ENCODE measurements at regions of chr6 and their contacts with region 1.

Region 1: GRCh38 chr6:135994857-135995544 is 143.5 kb downstream of the PDE7B start:
- DNase-seq: no peak
- H3K4me3 ChIP-seq: no peak overlapping the region
- CTCF ChIP-seq: no peak

Region 2: GRCh38 chr6:135438907-135439535 is 556.0 kb before region 1 on chr6:
- in situ Hi-C with region 1: no loop called
- DNase-seq: no peak
- H3K4me3 ChIP-seq: no peak overlapping the region
- CTCF ChIP-seq: peak; percentile 42

Region 3: GRCh38 chr6:135938576-135939207 is 56.3 kb before region 1 on chr6:
- in situ Hi-C with region 1: loop called (anchors 5 kb)
- DNase-seq: peak; percentile 23
- H3K4me3 ChIP-seq: no peak overlapping the region
- CTCF ChIP-seq: peak; percentile 33

Region 4: DNA sequence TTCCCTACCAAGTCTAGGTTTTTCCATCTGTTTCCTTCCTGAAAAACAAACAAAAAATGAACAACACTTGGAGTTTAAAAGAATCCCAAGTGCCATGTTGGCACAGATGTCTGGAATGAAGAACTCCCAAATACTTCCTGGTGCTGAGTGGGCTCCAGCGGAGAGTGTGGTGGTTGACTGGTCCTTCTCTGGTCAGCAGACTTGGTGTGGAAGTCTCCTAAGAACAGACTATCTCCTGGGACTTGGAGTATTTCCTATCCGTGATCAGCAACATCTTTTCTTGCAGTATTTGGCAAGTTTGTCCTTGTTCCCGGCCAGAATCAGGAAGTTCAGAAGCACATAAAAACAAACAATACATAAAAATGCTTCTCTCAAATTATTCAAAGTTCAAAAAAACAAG is 101.0 kb after region 1 on chr6:
- in situ Hi-C with region 1: no loop called
- DNase-seq: no peak
- H3K4me3 ChIP-seq: no peak overlapping the region
- CTCF ChIP-seq: no peak

Measured in astrocyte of the cerebellum (primary cell).